K562 (cell line): ENCODE measurements at regions of chr19 and their contacts with region 1.

Region 1: DNA sequence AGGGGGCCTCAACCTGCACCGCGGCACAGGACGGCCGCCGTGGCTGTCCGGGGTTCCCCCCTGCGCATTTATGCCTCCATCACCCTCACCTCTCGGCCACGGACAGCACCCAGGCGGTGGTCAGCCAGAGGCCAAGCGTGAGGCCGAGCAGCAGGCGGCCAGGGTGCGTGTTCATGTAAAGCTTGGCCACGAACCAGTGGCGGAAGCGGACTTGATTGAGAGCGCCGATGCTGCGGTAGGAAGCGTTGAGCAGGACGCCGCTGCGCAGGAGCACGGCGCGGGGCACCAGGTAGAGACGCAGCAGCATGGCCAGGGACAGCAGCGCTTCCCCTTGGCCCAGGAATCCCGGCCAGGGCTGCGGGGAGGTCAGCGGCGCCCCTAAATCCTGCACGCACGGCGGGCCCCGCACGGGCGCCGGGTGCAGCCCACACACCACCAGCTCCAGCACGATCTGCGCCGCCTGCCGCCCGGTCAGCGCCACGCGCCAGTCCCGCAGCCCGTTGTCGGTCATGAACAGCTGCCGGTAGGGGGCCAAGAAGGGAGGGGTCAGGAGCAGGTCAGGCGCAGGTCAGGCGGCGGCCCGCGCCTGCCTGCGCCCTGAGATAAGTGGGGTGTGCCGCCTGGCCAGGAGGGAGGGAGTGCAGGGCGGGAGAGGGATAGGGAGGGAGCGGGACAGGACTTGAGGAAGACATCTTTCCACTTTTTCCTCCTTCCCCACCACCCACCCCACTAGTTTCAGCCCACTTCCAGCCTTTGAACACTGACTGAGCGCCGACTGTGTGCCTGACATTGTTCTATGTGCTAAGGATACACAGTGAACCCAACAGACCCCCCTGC is 6.5 kb downstream of the KCNN4 start:
- DNase-seq: peak; percentile 96 to 98 (median 97)
- ATAC-seq: peak; percentile 88
- H3K4me3 ChIP-seq: peak overlapping the region; percentile 51
- H3K27ac ChIP-seq: peak overlapping the region; percentile 95
- H3K4me1 ChIP-seq: peaks cover 61 to 63% of the 10 kb centered on the region in 2 experiments
- H3K27me3 ChIP-seq: no peaks in the 10 kb centered on the region
- CTCF ChIP-seq: peak; percentile 86 to 99 (median 99)
- EP300 ChIP-seq: peak; percentile 98
- POLR2A ChIP-seq: peak; percentile 65; the same call in 1 of the 2 replicates
- RAD21 ChIP-seq: peak; percentile 68 to 76

Region 2: DNA sequence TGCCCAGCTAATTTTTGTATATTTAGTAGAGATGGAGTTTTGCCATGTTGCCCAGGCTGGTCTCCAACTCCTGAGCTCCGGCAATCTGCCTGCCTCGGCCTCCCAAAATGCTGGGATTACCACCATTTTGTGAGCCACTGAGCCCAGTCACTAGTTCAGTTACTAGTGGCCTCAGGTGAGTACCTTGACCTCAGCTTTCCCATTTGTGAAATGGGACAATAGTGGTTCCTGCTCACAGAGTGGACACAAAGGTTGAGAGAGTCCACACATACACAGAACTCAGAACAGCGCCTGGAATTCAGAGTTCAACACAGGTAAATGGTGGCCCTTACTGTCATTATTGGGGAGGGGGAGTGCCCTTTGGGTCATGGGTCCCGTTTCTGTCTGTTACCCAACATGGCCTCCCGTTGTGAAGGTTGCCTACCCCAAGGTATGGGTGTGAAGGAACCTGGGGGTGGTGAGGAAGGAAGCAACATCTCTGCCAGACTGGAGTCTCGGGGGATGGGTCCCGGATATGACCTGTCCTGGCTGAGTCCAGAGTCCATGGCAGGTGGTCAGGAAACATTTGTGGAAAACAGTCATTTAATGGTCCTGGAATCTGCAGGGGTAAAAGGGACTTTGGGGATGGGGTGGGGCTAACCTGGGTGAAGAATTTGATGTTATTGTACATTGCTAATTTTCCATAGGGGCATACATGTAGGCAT is 70.2 kb before region 1 on chr19:
- CTCF ChIA-PET with region 1: no interaction called
- POLR2A ChIA-PET with region 1: no interaction called
- in situ Hi-C with region 1: no loop called
- intact Hi-C with region 1: no loop called
- DNase-seq: no peak
- ATAC-seq: no peak
- H3K4me3 ChIP-seq: no peak overlapping the region
- H3K27ac ChIP-seq: no peak overlapping the region
- H3K4me1 ChIP-seq: peaks cover 18 to 25% of the 10 kb centered on the region in 2 experiments
- H3K27me3 ChIP-seq: no peaks in the 10 kb centered on the region
- CTCF ChIP-seq: no peak
- EP300 ChIP-seq: no peak
- POLR2A ChIP-seq: no peak
- RAD21 ChIP-seq: no peak

Region 3: GRCh38 chr19:43731846-43732245 is 42.5 kb before region 1 on chr19:
- CTCF ChIA-PET with region 1: no interaction called
- POLR2A ChIA-PET with region 1: no interaction called
- in situ Hi-C with region 1: no loop called
- intact Hi-C with region 1: no loop called
- DNase-seq: no peak
- ATAC-seq: no peak
- H3K4me3 ChIP-seq: no peak overlapping the region
- H3K27ac ChIP-seq: no peak overlapping the region
- H3K4me1 ChIP-seq: no peaks in the 10 kb centered on the region
- H3K27me3 ChIP-seq: no peaks in the 10 kb centered on the region
- CTCF ChIP-seq: no peak
- EP300 ChIP-seq: no peak
- POLR2A ChIP-seq: no peak
- RAD21 ChIP-seq: no peak

Region 4: GRCh38 chr19:43754503-43755255 is 19.6 kb before region 1 on chr19 and contains the start of gene SMG9:
- CTCF ChIA-PET with region 1: interaction called, 3 read pairs
- POLR2A ChIA-PET with region 1: interaction called, 71 read pairs
- in situ Hi-C with region 1: no loop called
- intact Hi-C with region 1: no loop called
- DNase-seq: peak; percentile 97 to 98 (median 97)
- ATAC-seq: peak; percentile 90
- H3K4me3 ChIP-seq: peak within 1 kb of the TSS; percentile 70
- H3K27ac ChIP-seq: peak within 1 kb of the TSS; percentile 100
- H3K4me1 ChIP-seq: peaks cover 40 to 41% of the 10 kb centered on the region in 2 experiments
- H3K27me3 ChIP-seq: no peaks in the 10 kb centered on the region
- CTCF ChIP-seq: no peak
- EP300 ChIP-seq: peak; percentile 19; the same call in 1 of the 2 replicates
- POLR2A ChIP-seq: peak; percentile 98
- RAD21 ChIP-seq: no peak
- polyA plus RNA-seq, gene SMG9: 1.7 to 3.9 TPM

Region 5: DNA sequence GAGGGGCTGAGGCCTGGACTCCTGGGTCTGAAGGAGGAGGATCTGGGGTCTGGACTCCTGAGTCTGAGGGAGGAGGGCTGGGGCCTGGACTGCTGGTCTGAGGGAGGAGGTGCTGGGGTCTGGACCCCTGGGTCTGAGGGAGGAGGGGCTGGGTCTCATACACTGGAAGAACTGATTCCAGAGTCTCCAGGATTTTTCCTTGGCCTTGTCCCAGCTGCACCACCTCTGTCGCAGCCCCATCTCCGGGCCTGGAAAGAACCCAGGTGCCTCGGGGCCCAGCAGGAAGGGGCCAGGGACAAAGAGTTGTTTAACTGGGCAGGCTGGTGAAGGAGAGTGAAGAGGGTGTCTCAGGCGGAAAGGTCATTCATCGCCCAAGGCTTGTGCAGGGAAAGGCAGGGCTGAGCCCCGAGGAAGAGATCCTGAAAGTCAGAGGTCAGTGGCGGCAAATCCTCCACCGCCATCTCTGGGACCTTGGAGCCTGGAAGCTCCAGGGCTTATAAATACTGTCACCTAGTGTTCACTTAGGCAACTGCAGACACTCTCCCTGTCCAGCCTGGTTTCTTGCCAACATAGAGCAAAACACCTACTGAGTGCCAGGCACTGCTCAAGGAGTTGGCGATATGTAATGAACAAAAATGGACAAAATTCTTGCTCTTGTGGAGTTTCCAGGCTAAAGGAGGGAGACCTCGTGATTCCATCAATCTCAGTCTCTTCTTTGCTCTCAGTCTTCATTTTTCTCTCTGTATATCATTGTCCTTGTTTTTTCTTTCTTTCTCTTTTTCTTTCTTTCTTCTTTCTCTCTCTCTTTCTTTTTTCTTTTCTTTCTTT is 10.9 kb after region 1 on chr19:
- CTCF ChIA-PET with region 1: no interaction called
- POLR2A ChIA-PET with region 1: interaction called, 3 read pairs
- in situ Hi-C with region 1: no loop called
- intact Hi-C with region 1: loop called (anchors 1 kb)
- DNase-seq: peak; percentile 69 to 90 (median 73)
- ATAC-seq: peak; percentile 82
- H3K4me3 ChIP-seq: no peak overlapping the region
- H3K27ac ChIP-seq: peak overlapping the region; percentile 75
- H3K4me1 ChIP-seq: peaks cover 44 to 50% of the 10 kb centered on the region in 2 experiments
- H3K27me3 ChIP-seq: no peaks in the 10 kb centered on the region
- CTCF ChIP-seq: peak; percentile 97 to 99 (median 98)
- EP300 ChIP-seq: no peak; the same call in 1 of the 2 replicates
- POLR2A ChIP-seq: no peak
- RAD21 ChIP-seq: peak; percentile 95 to 98

Region 6: DNA sequence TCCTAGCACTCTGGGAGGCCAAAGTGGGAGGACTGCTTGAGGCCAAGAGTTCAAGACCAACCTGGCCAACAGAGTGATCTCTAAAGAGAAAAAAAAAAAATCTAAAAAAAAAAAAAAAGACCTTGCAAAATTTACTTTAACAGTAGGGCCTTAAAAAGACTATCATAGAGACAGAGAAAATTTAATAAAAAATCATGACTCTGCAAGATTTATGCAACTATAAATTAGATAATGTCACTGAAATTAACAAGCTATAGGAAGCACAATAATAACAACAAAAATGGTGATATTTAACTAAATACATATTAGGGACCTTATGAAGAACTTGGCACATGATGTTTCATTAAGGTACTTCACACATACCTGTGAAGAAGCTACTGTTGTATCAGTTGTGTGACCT is 149.6 kb after region 1 on chr19:
- CTCF ChIA-PET with region 1: no interaction called
- POLR2A ChIA-PET with region 1: no interaction called
- in situ Hi-C with region 1: no loop called
- intact Hi-C with region 1: no loop called
- DNase-seq: no peak
- ATAC-seq: no peak
- H3K4me3 ChIP-seq: no peak overlapping the region
- H3K27ac ChIP-seq: no peak overlapping the region
- H3K4me1 ChIP-seq: no peaks in the 10 kb centered on the region
- H3K27me3 ChIP-seq: no peaks in the 10 kb centered on the region
- CTCF ChIP-seq: no peak
- EP300 ChIP-seq: no peak
- POLR2A ChIP-seq: no peak
- RAD21 ChIP-seq: no peak